ENCODE measurements at regions of chr2 and their contacts with region 1.

Region 1: GRCh38 chr2:119407430-119408220 is 24.0 kb upstream of the TMEM37 start:
- DNase-seq: no peak
- ATAC-seq: peak; percentile 76

Region 2: GRCh38 chr2:119264781-119265692 is 142.6 kb before region 1 on chr2:
- intact Hi-C with region 1: no loop called
- DNase-seq: no peak
- ATAC-seq: peak; percentile 91

Region 3: DNA sequence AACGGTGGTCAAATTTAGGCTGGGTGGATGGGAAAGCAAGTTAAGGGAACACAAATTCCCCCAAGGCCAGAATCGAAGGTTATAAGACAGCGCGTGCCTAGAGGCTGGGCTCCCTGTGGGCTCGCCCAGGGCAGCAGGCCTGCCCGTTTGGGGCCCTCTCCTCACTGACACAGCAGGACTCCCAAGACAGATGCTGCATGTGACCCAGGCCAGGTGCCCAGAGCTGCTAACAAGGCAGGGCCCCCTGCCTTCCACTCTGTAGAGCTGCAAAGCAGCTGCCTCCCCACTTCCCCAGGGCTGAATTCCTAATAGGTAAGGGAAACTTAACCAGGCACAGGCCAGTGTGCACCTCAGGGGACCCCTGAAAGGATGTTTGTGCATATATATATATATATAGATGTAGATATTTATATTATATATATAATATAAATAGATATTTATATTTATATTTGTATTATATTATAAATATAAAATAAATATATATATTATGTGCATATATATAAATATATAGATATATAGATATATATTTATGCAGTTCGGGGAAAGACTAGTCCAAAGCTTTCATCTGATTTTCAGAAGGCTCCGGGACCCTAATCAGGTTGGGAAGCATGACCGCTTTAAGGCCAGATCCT is 67.7 kb after region 1 on chr2:
- intact Hi-C with region 1: loop called (anchors 2 kb)
- DNase-seq: peak; percentile 67
- ATAC-seq: peak; percentile 66

Region 4: DNA sequence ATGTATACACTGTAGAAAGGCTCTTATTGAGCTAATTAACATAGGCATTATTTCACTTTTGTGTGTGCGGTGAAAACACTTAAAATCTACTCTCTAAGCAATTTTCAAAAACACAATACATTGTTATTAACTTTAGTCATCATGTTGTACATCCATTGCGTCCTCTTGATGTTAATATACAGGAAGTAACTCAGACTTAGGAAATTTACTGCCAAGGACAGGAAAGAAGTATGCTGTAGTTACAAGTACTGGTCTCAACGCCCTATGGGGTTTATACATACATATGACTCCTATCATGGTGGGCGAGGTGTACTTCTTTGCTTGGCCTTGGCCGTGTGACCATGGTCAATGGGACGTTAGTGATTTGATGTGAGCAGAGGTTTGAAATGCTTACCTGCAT is 101.1 kb after region 1 on chr2:
- intact Hi-C with region 1: no loop called
- DNase-seq: no peak
- ATAC-seq: no peak